CD4-positive, alpha-beta T cell (primary cell): ENCODE measurements at regions of chr1 and their contacts with region 1.

Region 1: DNA sequence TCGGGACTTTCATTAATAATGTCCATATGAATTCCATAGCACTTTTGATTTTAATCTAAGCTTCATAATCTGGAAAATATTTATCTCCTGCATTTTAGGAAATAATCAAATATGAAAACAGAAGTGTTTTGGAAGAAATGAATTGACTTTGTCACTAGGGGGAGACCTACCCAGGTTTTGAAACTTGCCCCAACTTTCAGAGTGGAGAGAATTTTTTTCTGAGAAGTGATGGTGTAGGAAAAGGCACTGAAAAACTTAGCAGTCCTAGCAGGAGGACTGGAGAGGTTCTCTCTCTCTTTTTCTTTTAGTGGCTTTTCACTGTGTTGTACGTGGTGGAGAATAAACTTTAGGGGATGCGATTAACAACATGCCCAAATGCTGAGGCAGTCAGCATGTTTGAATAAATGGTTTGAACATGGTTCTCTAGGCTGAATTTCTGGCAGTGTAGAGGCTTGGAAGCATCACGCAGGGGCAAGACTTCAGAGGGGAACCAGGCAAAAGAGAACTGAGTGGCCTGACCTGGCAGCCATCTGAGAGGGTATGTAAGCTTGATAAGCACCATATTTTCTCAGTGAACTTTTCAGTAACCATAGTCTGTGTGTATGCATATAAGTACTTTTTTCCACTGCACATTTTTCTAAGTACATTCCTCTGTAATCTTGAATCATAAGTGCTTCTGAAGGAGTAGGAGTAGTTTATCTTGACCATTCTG is 68.3 kb upstream of the NEK7 start:
- DNase-seq: peak in 3 of 14 experiments; percentile 52 to 59 (median 56)
- ATAC-seq: no peak
- H3K4me3 ChIP-seq: no peak overlapping the region
- H3K4me3 Mint-ChIP-seq: no peak overlapping the region
- H3K27ac ChIP-seq: no peak overlapping the region
- H3K27ac Mint-ChIP-seq: no peak overlapping the region
- H3K4me1 ChIP-seq: no peaks in the 10 kb centered on the region
- H3K4me1 Mint-ChIP-seq: no peaks in the 10 kb centered on the region
- H3K27me3 ChIP-seq: no peaks in the 10 kb centered on the region
- H3K27me3 Mint-ChIP-seq: no peaks in the 10 kb centered on the region
- CTCF ChIP-seq: peak; percentile 80

Region 2: GRCh38 chr1:198253668-198254067 is 165.2 kb after region 1 on chr1:
- CTCF ChIA-PET with region 1: no interaction called
- POLR2A ChIA-PET with region 1: no interaction called
- intact Hi-C with region 1: loop called in 1 of 2 experiments (anchors 1 kb)
- DNase-seq: peak in 3 of 14 experiments; percentile 1 to 23 (median 8)
- ATAC-seq: no peak
- H3K4me3 ChIP-seq: no peak overlapping the region
- H3K4me3 Mint-ChIP-seq: peak overlapping the region; percentile 50
- H3K27ac ChIP-seq: no peak overlapping the region
- H3K27ac Mint-ChIP-seq: peak overlapping the region; percentile 29
- H3K4me1 ChIP-seq: peaks cover 3% of the 10 kb centered on the region
- H3K4me1 Mint-ChIP-seq: peaks cover 48% of the 10 kb centered on the region
- H3K27me3 ChIP-seq: no peaks in the 10 kb centered on the region
- H3K27me3 Mint-ChIP-seq: no peaks in the 10 kb centered on the region
- CTCF ChIP-seq: no peak

Region 3: GRCh38 chr1:198275597-198275996 is 187.1 kb after region 1 on chr1:
- CTCF ChIA-PET with region 1: no interaction called
- POLR2A ChIA-PET with region 1: no interaction called
- intact Hi-C with region 1: loop called (anchors 1 to 5 kb)
- DNase-seq: peak in 1 of 14 experiments; percentile 10
- ATAC-seq: no peak
- H3K4me3 ChIP-seq: no peak overlapping the region
- H3K4me3 Mint-ChIP-seq: no peak overlapping the region
- H3K27ac ChIP-seq: no peak overlapping the region
- H3K27ac Mint-ChIP-seq: no peak overlapping the region
- H3K4me1 ChIP-seq: no peaks in the 10 kb centered on the region
- H3K4me1 Mint-ChIP-seq: peaks cover 16% of the 10 kb centered on the region
- H3K27me3 ChIP-seq: no peaks in the 10 kb centered on the region
- H3K27me3 Mint-ChIP-seq: no peaks in the 10 kb centered on the region
- CTCF ChIP-seq: no peak

Region 4: DNA sequence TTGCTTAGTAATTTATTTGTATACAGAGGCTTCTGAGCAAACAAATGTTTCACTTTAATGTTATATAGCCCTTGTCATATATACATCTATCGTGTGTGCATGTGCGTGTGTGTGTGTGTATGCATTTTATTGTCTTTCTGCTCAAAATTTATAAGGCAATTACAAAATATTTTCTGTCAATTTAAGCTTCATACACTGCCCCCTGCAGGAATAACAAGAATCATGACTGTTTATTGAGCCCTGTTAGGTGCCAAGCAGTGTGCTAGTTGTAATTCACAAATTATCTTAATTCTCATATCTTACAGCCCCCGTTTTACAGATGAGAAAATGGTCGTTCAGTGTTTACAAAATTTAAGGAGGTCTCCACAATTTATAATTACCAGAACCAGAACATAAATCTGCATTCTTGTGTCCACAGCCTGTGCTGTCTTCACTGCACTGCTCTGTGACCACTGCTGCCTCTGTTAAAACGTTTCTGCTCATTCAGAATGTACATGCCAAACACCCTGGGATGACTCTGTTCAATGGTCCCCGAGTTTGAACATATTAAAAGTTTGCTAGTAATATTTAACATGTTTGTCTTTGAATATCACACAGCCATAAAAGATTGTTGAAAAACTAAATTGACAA is 270.6 kb after region 1 on chr1:
- CTCF ChIA-PET with region 1: no interaction called
- POLR2A ChIA-PET with region 1: no interaction called
- intact Hi-C with region 1: loop called (anchors 2 kb)
- DNase-seq: peak in 4 of 14 experiments; percentile 10 to 43 (median 37)
- ATAC-seq: no peak
- H3K4me3 ChIP-seq: no peak overlapping the region
- H3K4me3 Mint-ChIP-seq: no peak overlapping the region
- H3K27ac ChIP-seq: no peak overlapping the region
- H3K27ac Mint-ChIP-seq: no peak overlapping the region
- H3K4me1 ChIP-seq: no peaks in the 10 kb centered on the region
- H3K4me1 Mint-ChIP-seq: no peaks in the 10 kb centered on the region
- H3K27me3 ChIP-seq: no peaks in the 10 kb centered on the region
- H3K27me3 Mint-ChIP-seq: no peaks in the 10 kb centered on the region
- CTCF ChIP-seq: peak; percentile 60